Astrocyte of the cerebellum (primary cell): ENCODE measurements at regions of chr2 and their contacts with region 1.

Region 1: GRCh38 chr2:163132850-163133249 is 294.3 kb upstream of the KCNH7 start:
- DNase-seq: no peak
- H3K4me3 ChIP-seq: no peak overlapping the region
- CTCF ChIP-seq: peak; percentile 13

Region 2: GRCh38 chr2:162890690-162891311 is 242.0 kb before region 1 on chr2:
- in situ Hi-C with region 1: loop called (anchors 10 kb)
- DNase-seq: peak; percentile 64
- H3K4me3 ChIP-seq: no peak overlapping the region
- CTCF ChIP-seq: peak; percentile 89

Region 3: GRCh38 chr2:163171786-163172531 is 39.1 kb after region 1 on chr2:
- in situ Hi-C with region 1: no loop called
- DNase-seq: no peak
- H3K4me3 ChIP-seq: no peak overlapping the region
- CTCF ChIP-seq: no peak